ENCODE measurements at regions of chr12 and their contacts with region 1.

Region 1: GRCh38 chr12:118372541-118373495 is at the start of gene TAOK3:
- DNase-seq: peak; percentile 98
- ATAC-seq: peak; percentile 89
- H3K4me3 Mint-ChIP-seq: peak within 1 kb of the TSS; percentile 92
- H3K27ac Mint-ChIP-seq: peak within 1 kb of the TSS; percentile 91
- H3K4me1 Mint-ChIP-seq: peaks cover 35% of the 10 kb centered on the region
- H3K27me3 Mint-ChIP-seq: no peaks in the 10 kb centered on the region
- CTCF ChIP-seq: no peak
- total RNA-seq, gene TAOK3: 46.0 to 47.1 TPM

Region 2: GRCh38 chr12:117662620-117663395 is 710.0 kb before region 1 on chr12:
- CTCF ChIA-PET with region 1: no interaction called
- POLR2A ChIA-PET with region 1: no interaction called
- intact Hi-C with region 1: no loop called
- DNase-seq: no peak
- ATAC-seq: no peak
- H3K4me3 Mint-ChIP-seq: no peak overlapping the region
- H3K27ac Mint-ChIP-seq: no peak overlapping the region
- H3K4me1 Mint-ChIP-seq: no peaks in the 10 kb centered on the region
- H3K27me3 Mint-ChIP-seq: no peaks in the 10 kb centered on the region
- CTCF ChIP-seq: no peak

Region 3: DNA sequence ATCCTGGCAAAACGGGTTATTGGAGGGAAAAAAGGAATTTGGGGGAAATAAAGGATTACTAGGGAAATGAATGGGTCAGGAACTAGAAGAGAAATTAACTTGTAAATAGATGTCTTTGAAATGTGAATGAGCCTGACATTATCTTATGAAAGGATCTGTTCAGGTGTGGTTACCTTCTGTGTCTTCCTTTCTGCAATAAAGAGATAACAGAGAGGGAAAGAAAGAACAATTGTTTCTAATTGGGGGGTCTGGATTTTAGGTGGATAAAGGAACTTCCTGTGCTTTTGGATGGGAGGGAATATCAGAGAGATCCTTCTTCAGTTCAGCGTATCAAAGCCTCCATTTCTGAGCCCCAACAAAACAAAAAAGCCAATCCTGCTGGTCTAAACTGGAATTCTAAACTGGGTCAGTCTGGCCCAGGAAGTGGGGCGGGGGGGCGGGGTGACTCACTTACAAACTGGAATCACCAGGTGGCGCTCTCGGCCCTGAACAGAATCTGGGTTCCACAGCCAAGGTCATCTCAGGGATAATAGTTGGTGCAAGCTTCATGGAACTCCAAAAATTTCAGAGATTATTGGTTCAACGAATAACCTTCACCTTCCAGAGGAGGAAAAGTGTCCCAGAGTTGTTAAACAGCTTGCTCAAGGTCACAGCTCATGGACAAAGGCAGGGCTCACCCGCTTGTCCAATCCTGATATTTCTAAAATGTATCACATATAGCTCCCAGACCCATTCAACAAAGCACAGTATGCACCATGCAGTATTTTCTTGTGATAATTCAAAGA is 252.0 kb before region 1 on chr12:
- CTCF ChIA-PET with region 1: interaction called, 25 read pairs
- POLR2A ChIA-PET with region 1: interaction called, 5 read pairs
- intact Hi-C with region 1: no loop called
- DNase-seq: peak; percentile 79
- ATAC-seq: peak; percentile 66
- H3K4me3 Mint-ChIP-seq: no peak overlapping the region
- H3K27ac Mint-ChIP-seq: peak overlapping the region; percentile 79
- H3K4me1 Mint-ChIP-seq: peaks cover 8% of the 10 kb centered on the region
- H3K27me3 Mint-ChIP-seq: no peaks in the 10 kb centered on the region
- CTCF ChIP-seq: peak; percentile 93

Region 4: DNA sequence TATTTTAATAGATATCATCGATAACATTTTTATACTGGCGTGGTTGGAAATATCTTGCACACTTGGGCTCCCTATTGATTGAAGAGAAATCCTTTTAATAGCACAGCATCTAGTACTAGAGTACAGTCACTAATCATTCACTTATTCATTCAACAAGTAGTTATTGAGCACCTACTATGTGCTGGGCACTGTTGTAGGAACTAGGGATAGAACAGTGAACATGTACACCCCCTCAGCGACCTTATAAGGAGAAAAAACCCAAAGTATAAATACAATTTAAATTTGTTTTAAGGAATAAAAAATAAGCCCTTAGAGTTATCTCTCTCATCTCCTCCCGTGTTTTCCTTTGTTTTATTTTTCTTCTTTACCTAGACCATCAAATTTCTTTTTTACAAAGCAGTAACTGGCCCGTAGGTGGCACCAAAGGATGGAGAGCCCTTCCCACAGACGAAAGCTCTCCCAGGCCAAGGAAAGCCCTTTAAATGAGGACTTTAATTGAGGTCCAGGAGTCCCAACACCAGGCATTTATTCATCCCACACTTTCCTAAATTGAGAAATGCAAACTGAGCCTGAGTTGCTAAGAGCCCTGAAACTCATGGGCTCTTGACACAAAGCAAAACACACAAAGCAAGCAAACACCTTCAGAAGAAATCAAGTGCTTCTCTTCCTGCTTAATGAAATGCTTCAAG is 207.9 kb before region 1 on chr12:
- CTCF ChIA-PET with region 1: interaction called, 42 read pairs
- POLR2A ChIA-PET with region 1: no interaction called
- intact Hi-C with region 1: no loop called
- DNase-seq: peak; percentile 26
- ATAC-seq: no peak
- H3K4me3 Mint-ChIP-seq: no peak overlapping the region
- H3K27ac Mint-ChIP-seq: no peak overlapping the region
- H3K4me1 Mint-ChIP-seq: peaks cover 26% of the 10 kb centered on the region
- H3K27me3 Mint-ChIP-seq: no peaks in the 10 kb centered on the region
- CTCF ChIP-seq: no peak

Region 5: DNA sequence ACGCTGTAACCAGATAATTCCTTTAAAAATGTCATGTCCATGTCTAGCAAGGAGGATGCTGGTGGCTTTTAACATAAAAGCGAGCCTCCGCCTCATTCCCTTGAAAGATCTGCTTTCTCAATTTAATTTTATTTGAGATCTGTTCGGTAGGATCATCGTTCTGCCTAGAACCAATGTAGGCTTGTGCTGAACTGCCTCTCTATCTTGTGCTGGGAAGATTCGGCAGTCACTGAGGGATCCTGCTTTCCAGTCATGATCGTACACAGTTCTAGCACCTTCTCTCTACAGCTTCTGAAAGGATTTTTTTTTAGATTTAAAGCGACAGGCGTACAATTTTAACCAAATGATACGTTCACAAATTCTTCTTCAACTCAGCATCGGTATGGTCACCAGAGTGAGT is 182.6 kb before region 1 on chr12:
- CTCF ChIA-PET with region 1: interaction called, 107 read pairs
- POLR2A ChIA-PET with region 1: no interaction called
- intact Hi-C with region 1: no loop called
- DNase-seq: no peak
- ATAC-seq: no peak
- H3K4me3 Mint-ChIP-seq: no peak overlapping the region
- H3K27ac Mint-ChIP-seq: no peak overlapping the region
- H3K4me1 Mint-ChIP-seq: peaks cover 14% of the 10 kb centered on the region
- H3K27me3 Mint-ChIP-seq: no peaks in the 10 kb centered on the region
- CTCF ChIP-seq: no peak

Region 6: DNA sequence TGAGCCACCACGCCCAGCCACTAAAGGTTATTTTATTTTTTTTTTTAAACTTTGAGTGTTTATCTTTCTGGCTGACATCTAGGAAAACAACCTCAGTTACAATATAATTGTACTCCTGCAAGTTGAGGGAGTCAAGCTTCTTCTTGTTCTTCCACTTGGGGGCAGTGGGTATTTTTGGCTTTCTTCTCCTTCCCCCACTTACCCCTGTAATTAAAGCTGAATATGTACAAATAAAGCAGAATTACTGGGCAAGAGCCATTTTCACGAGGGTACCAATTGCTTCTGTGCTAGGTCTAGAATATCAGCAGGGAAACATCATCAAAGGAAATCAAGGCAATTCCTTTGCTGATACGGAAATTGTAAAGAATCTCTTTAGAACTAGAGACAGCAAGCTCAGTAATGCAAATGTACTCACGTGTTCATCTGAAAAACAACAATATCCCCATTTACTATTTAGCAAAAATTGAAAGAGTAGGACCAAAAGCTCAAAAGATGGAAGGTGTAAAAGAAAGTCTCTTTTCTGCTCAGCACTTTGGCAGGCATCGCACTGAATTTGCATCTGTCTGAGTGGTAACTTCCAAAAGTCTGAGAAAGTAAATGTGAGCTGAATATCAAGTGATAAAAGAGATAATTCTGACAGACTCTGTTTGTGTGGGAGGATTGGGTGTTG is 72.9 kb before region 1 on chr12:
- CTCF ChIA-PET with region 1: interaction called, 12 read pairs
- POLR2A ChIA-PET with region 1: no interaction called
- intact Hi-C with region 1: loop called (anchors 5 kb)
- DNase-seq: no peak
- ATAC-seq: no peak
- H3K4me3 Mint-ChIP-seq: no peak overlapping the region
- H3K27ac Mint-ChIP-seq: no peak overlapping the region
- H3K4me1 Mint-ChIP-seq: peaks cover 35% of the 10 kb centered on the region
- H3K27me3 Mint-ChIP-seq: no peaks in the 10 kb centered on the region
- CTCF ChIP-seq: no peak

Region 7: GRCh38 chr12:118312578-118312977 is 60.2 kb before region 1 on chr12:
- CTCF ChIA-PET with region 1: interaction called, 11 read pairs
- POLR2A ChIA-PET with region 1: no interaction called
- intact Hi-C with region 1: loop called (anchors 5 kb)
- DNase-seq: no peak
- ATAC-seq: peak; percentile 86
- H3K4me3 Mint-ChIP-seq: peak overlapping the region; percentile 1
- H3K27ac Mint-ChIP-seq: peak overlapping the region; percentile 70
- H3K4me1 Mint-ChIP-seq: peaks cover 50% of the 10 kb centered on the region
- H3K27me3 Mint-ChIP-seq: no peaks in the 10 kb centered on the region
- CTCF ChIP-seq: no peak

Region 8: DNA sequence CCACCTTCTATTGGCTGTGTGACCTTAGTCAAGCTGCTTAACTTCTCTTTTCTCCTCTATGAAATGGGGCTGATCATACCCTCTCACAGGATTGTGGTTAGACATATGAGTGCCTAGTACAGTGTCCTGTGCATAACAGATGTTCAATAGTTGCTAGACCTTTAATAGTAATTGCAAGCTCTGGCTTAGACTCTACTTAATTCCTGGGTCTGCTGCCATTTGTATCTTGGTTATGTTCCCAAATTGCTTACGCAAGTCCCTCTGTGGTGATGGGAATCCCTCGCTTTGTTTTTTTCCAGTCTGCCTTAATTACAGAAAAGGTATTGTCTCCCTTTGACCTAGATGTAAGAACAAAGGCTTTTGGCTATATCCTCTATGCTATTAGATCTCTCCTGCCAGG is 18.6 kb after region 1 on chr12:
- CTCF ChIA-PET with region 1: interaction called, 48 read pairs
- POLR2A ChIA-PET with region 1: interaction called, 3 read pairs
- intact Hi-C with region 1: no loop called
- DNase-seq: no peak
- ATAC-seq: no peak
- H3K4me3 Mint-ChIP-seq: no peak overlapping the region
- H3K27ac Mint-ChIP-seq: no peak overlapping the region
- H3K4me1 Mint-ChIP-seq: no peaks in the 10 kb centered on the region
- H3K27me3 Mint-ChIP-seq: no peaks in the 10 kb centered on the region
- CTCF ChIP-seq: no peak

Region 9: GRCh38 chr12:118437011-118437436 is 64.2 kb after region 1 on chr12:
- CTCF ChIA-PET with region 1: no interaction called
- POLR2A ChIA-PET with region 1: no interaction called
- intact Hi-C with region 1: no loop called
- DNase-seq: no peak
- ATAC-seq: no peak
- H3K4me3 Mint-ChIP-seq: no peak overlapping the region
- H3K27ac Mint-ChIP-seq: no peak overlapping the region
- H3K4me1 Mint-ChIP-seq: no peaks in the 10 kb centered on the region
- H3K27me3 Mint-ChIP-seq: peaks cover 3% of the 10 kb centered on the region
- CTCF ChIP-seq: no peak

Measured in activated CD8-positive, alpha-beta T cell treated with anti-CD3 and anti-CD28 coated beads for 36 hours (primary cell).